SK-N-SH (cell line): ENCODE measurements at regions of chr1 and their contacts with region 1.

Region 1: GRCh38 chr1:162391790-162392563 is 10.4 kb downstream of the C1orf226 start:
- DNase-seq: peak; percentile 54
- H3K4me3 ChIP-seq: no peak overlapping the region
- H3K27ac ChIP-seq: no peak overlapping the region
- H3K4me1 ChIP-seq: peaks cover 0 to 19% of the 10 kb centered on the region in 2 experiments; a peak in 1 of 4 replicates
- H3K27me3 ChIP-seq: peaks cover 4% of the 10 kb centered on the region; the same call in 1 of the 2 replicates
- CTCF ChIP-seq: peak; percentile 80
- EP300 ChIP-seq: no peak
- RAD21 ChIP-seq: peak; percentile 87

Region 2: DNA sequence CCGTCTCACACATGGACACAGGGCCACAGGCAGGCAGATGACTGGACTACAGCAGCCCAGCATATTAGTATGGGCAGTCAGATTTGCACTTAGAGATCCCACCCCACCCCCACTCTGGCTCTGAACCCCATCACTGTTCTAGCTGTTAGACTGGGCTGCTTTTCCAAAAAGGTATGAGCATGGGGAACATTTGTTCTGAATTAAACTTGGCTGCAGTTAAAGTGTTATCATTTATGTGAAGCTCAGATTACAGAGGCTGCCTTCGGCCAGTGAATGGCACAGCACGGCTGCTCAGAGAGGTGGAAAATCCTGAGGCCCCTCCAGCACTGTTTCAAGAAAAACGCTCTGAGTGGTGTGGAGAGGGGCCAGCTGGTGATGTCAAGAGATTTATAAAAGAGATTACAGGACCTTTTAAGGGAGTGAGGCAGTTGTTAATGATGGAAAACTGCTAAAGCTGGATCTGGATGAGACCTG is 329.4 kb before region 1 on chr1:
- CTCF ChIA-PET with region 1: interaction called, 20 read pairs
- POLR2A ChIA-PET with region 1: no interaction called
- DNase-seq: peak; percentile 70
- H3K4me3 ChIP-seq: no peak overlapping the region
- H3K27ac ChIP-seq: peak overlapping the region in 1 of 2 experiments; percentile 81; a peak in 2 of 4 replicates
- H3K4me1 ChIP-seq: peaks cover 13 to 15% of the 10 kb centered on the region in 2 experiments; a peak in 3 of 4 replicates
- H3K27me3 ChIP-seq: no peaks in the 10 kb centered on the region; the same call in 1 of the 2 replicates
- CTCF ChIP-seq: no peak
- EP300 ChIP-seq: peak in 1 of 2 experiments; percentile 86; a peak in 2 of 4 replicates
- RAD21 ChIP-seq: no peak

Region 3: DNA sequence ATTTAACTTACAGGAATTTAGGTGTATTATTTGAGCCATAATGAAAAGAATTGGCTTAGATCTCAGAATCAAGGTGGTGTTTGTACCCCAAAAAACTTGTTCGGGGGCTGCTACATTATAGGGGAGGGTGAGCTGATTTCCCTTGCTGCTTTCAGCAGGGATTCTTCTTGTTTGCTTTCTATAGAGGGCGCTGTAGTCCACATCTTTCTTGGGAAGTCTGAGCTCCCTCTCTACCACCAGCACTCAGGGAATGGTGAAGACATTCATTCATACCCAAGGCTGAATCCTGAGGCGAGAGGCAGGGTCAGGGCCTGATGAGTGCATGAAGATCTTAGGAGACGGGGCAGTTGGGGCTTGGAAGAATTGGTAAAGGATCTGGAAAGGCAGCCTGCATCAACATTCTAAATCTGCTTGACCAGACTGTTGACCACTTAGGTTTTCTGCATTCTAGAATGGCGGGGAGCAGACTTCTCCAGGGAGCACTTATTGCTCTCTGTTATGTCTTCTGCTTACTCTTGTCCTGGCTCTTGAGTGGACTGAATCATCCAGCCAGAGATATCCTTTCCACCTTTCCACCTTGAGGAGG is 34.2 kb before region 1 on chr1:
- CTCF ChIA-PET with region 1: interaction called, 63 read pairs
- POLR2A ChIA-PET with region 1: no interaction called
- DNase-seq: peak; percentile 60
- H3K4me3 ChIP-seq: peak overlapping the region in 1 of 2 experiments; percentile 34; a peak in 1 of 4 replicates
- H3K27ac ChIP-seq: no peak overlapping the region
- H3K4me1 ChIP-seq: no peaks in the 10 kb centered on the region
- H3K27me3 ChIP-seq: no peaks in the 10 kb centered on the region
- CTCF ChIP-seq: peak; percentile 59
- EP300 ChIP-seq: no peak
- RAD21 ChIP-seq: peak; percentile 71

Region 4: GRCh38 chr1:162373541-162374375 is 18.2 kb before region 1 on chr1:
- CTCF ChIA-PET with region 1: interaction called, 16 read pairs
- POLR2A ChIA-PET with region 1: no interaction called
- DNase-seq: no peak
- H3K4me3 ChIP-seq: no peak overlapping the region
- H3K27ac ChIP-seq: peak overlapping the region in 1 of 2 experiments; percentile 77; a peak in 1 of 4 replicates
- H3K4me1 ChIP-seq: peaks cover 0 to 25% of the 10 kb centered on the region in 2 experiments; a peak in 1 of 4 replicates
- H3K27me3 ChIP-seq: no peaks in the 10 kb centered on the region; the same call in 1 of the 2 replicates
- CTCF ChIP-seq: no peak
- EP300 ChIP-seq: no peak
- RAD21 ChIP-seq: no peak

Region 5: GRCh38 chr1:162381383-162381782 is 10.6 kb before region 1 on chr1 and contains the start of gene C1orf226:
- CTCF ChIA-PET with region 1: interaction called, 23 read pairs
- POLR2A ChIA-PET with region 1: no interaction called
- DNase-seq: no peak
- H3K4me3 ChIP-seq: no peak within 1 kb of the TSS
- H3K27ac ChIP-seq: no peak within 1 kb of the TSS
- H3K4me1 ChIP-seq: no peaks in the 10 kb centered on the region
- H3K27me3 ChIP-seq: peaks cover 5% of the 10 kb centered on the region; the same call in 1 of the 2 replicates
- CTCF ChIP-seq: no peak
- EP300 ChIP-seq: no peak
- RAD21 ChIP-seq: no peak
- polyA plus RNA-seq, gene C1orf226: 0.03 and 0.05 TPM in 2 replicates

Region 6: GRCh38 chr1:162502928-162503327 is 111.0 kb after region 1 on chr1:
- CTCF ChIA-PET with region 1: no interaction called
- POLR2A ChIA-PET with region 1: no interaction called
- DNase-seq: no peak
- H3K4me3 ChIP-seq: no peak overlapping the region
- H3K27ac ChIP-seq: peak overlapping the region in 1 of 2 experiments; percentile 80; a peak in 2 of 4 replicates
- H3K4me1 ChIP-seq: peaks cover 7 to 33% of the 10 kb centered on the region in 2 experiments; a peak in 3 of 4 replicates
- H3K27me3 ChIP-seq: no peaks in the 10 kb centered on the region
- CTCF ChIP-seq: no peak
- EP300 ChIP-seq: no peak
- RAD21 ChIP-seq: no peak

Region 7: GRCh38 chr1:162732566-162733335 is 340.8 kb after region 1 on chr1:
- CTCF ChIA-PET with region 1: no interaction called
- POLR2A ChIA-PET with region 1: no interaction called
- DNase-seq: no peak
- H3K4me3 ChIP-seq: no peak overlapping the region
- H3K27ac ChIP-seq: no peak overlapping the region
- H3K4me1 ChIP-seq: no peaks in the 10 kb centered on the region; a peak in 1 of 4 replicates
- H3K27me3 ChIP-seq: no peaks in the 10 kb centered on the region
- CTCF ChIP-seq: no peak
- EP300 ChIP-seq: no peak
- RAD21 ChIP-seq: no peak